Gastrocnemius medialis (tissue), 4 donors: ENCODE measurements at regions of chr1 and their contacts with region 1.

Region 1: DNA sequence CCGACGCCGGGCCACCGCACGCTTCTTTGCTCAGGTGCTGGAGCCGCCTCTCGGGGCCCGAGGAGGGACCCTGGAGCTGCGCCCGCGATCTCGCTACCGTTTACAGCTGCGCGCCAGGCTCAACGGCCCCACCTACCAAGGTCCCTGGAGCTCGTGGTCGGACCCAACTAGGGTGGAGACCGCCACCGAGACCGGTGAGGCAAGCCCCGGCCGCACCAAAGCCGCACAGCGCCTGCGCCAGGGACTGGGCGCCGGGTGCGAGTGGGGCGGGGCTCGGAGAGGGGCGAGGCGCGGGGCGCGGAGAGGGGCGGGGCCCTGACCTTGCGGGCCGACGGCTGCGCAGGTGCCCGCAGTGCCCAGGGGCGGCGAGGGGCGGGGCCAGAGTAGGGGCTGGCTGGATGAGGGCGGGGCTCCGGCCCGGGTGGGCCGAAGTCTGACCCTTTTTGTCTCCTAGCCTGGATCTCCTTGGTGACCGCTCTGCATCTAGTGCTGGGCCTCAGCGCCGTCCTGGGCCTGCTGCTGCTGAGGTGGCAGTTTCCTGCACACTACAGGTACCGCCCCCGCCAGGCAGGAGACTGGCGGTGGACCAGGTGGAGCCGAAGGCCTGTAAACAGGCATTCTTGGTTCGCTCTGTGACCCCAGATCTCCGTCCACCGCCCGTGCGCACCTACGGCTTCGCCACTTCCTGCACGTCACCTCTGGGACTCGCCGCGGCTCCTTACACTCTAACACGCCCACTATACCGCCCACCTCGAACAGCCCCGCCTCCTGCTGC is 9.8 kb upstream of the CDC20 start:
- DNase-seq: peak; percentile 46 to 78
- ATAC-seq: peak; percentile 71 to 83
- H3K4me3 ChIP-seq: peak overlapping the region; percentile 64 to 83 (median 70)
- H3K27ac ChIP-seq: peak overlapping the region; percentile 66 to 85 (median 78)
- H3K4me1 ChIP-seq: peaks cover 16 to 18% of the 10 kb centered on the region in 2 donors
- H3K27me3 ChIP-seq: no peaks in the 10 kb centered on the region
- CTCF ChIP-seq: no peak
- POLR2A ChIP-seq: peak; percentile 30 to 37

Region 2: DNA sequence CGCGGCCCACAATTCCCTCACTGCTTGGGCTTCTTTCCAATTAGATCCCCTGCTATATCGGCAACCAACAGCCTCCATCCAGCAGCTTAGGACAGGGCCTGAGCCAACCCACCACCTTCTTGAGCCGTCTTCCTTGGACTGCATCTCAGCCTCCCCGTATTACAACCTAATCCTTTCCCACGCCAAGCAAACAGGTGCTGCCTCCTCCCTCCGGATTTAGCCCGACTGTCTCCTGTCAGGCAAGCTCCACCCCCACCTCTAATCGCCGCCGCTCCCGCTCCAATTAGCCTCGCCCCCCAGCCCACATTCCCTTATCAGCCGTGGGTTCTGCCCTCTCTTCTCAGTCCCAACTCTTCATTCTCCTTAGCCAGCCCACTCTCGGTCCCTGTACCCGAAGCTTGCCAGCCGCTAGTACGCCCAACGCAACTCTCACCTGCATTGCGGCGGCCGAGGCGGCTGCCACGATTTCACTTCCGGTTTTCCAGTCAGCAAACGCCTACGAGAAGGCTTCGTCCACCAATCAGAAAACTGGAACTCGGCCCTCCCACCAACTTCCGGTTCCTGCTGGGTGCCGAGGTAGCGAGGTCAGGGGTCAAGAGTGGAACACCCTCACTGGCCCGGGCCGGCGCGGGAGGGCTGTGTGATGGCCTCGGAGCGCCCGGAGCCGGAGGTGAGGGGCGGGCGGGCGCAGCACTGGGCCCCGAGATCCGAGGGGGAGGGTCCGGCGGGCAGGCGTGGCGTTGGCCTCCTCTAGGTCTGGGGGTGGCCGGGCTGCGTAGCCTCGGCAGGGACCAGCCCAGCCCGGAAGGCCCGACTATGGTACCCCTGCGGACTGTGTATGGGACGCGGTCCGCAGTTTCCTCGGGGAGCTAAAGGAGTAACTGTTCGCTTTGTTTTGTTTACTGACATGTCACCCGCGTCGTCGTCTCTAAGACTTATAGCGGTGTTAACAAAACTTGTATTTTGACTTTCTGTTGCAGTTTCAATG is 40.6 kb after region 1 on chr1 and contains the starts of genes MED8 and SZT2:
- in situ Hi-C with region 1: no loop called
- intact Hi-C with region 1: loop called (anchors 2 kb)
- DNase-seq: peak; percentile 92 to 97
- ATAC-seq: peak; percentile 99 to 100
- H3K4me3 ChIP-seq: peak within 1 kb of the TSS; percentile 81 to 96 (median 92)
- H3K27ac ChIP-seq: peak within 1 kb of the TSS; percentile 88 to 94 (median 90)
- H3K4me1 ChIP-seq: peaks cover 25 to 26% of the 10 kb centered on the region in 2 donors
- H3K27me3 ChIP-seq: no peaks in the 10 kb centered on the region
- CTCF ChIP-seq: no peak
- POLR2A ChIP-seq: peak; percentile 70 to 86
- total RNA-seq, gene MED8: 14.9 to 30.8 (median 23.8) TPM
- total RNA-seq, gene SZT2: 15.9 to 20.9 (median 17.9) TPM